CD14-positive monocyte (primary cell): ENCODE measurements at regions of chr5 and their contacts with region 1.

Region 1: GRCh38 chr5:40688127-40688761 is 8.5 kb downstream of the PTGER4 start:
- DNase-seq: peak; percentile 80 to 87 (median 86)
- H3K4me3 ChIP-seq: peak overlapping the region in 1 of 3 experiments; percentile 98
- H3K4me3 Mint-ChIP-seq: peak overlapping the region; percentile 60 to 70
- H3K27ac ChIP-seq: peak overlapping the region in 1 of 2 donors; percentile 71
- H3K27ac Mint-ChIP-seq: peak overlapping the region in 6 of 7 donors; percentile 71 to 92 (median 85)
- H3K4me1 ChIP-seq: peaks cover 42 to 66% of the 10 kb centered on the region in 2 donors
- H3K4me1 Mint-ChIP-seq: peaks cover 67% of the 10 kb centered on the region
- H3K27me3 ChIP-seq: no peaks in the 10 kb centered on the region
- H3K27me3 Mint-ChIP-seq: no peaks in the 10 kb centered on the region
- CTCF ChIP-seq: peak; percentile 90

Region 2: DNA sequence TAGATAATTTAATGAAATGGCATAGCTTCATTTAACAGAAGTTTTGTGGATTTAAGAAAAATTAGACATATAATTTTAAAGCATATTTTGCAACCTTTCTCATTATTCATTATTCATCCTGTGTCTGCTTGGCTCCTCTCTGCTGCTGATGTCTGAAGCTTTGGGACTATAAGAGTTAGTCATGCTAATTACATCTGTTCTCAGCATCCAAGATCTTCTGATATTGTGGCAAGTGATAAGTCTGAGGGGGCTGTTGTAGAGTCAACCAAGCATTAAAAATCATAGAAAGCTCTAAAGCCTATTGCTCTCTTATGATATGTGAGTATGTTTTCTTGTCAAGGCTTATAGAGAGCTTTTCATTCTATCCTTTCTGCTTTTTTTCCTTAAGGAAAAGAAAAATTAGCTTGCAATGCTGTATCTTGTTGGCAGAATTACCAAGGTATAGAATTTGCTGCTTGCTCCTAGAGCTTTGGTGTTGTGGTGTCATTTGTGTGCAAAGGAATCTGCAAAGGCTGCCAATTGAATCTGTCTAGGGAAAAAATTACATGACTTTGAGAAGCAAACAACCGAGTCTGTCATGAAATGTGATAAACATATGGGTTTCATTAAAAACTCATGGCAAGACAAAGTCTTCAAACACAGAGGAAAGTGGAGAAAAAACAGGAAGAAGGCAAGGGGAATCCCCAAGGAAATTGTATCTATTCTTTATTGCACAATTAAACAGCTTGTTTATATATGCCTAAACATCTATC is 1107.4 kb before region 1 on chr5:
- intact Hi-C with region 1: loop called in 1 of 2 experiments (anchors 5 kb)
- DNase-seq: peak; percentile 35 to 70 (median 61)
- H3K4me3 ChIP-seq: peak overlapping the region in 1 of 3 experiments; percentile 9
- H3K4me3 Mint-ChIP-seq: peak overlapping the region in 1 of 2 donors; percentile 42
- H3K27ac ChIP-seq: no peak overlapping the region
- H3K27ac Mint-ChIP-seq: peak overlapping the region in 1 of 7 donors; percentile 61
- H3K4me1 ChIP-seq: peaks cover 10 to 15% of the 10 kb centered on the region in 2 donors
- H3K4me1 Mint-ChIP-seq: peaks cover 17% of the 10 kb centered on the region
- H3K27me3 ChIP-seq: no peaks in the 10 kb centered on the region
- H3K27me3 Mint-ChIP-seq: peaks cover 0 to 4% (median 0%) of the 10 kb centered on the region in 3 donors
- CTCF ChIP-seq: no peak

Region 3: GRCh38 chr5:39948867-39949468 is 739.3 kb before region 1 on chr5:
- intact Hi-C with region 1: loop called in 1 of 2 experiments (anchors 5 kb)
- DNase-seq: peak; percentile 37 to 61 (median 60)
- H3K4me3 ChIP-seq: no peak overlapping the region
- H3K4me3 Mint-ChIP-seq: no peak overlapping the region
- H3K27ac ChIP-seq: no peak overlapping the region
- H3K27ac Mint-ChIP-seq: peak overlapping the region in 3 of 7 donors; percentile 31 to 68 (median 34)
- H3K4me1 ChIP-seq: peaks cover 38 to 40% of the 10 kb centered on the region in 2 donors
- H3K4me1 Mint-ChIP-seq: peaks cover 34% of the 10 kb centered on the region
- H3K27me3 ChIP-seq: no peaks in the 10 kb centered on the region
- H3K27me3 Mint-ChIP-seq: peaks cover 0 to 2% (median 1%) of the 10 kb centered on the region in 3 donors
- CTCF ChIP-seq: peak; percentile 77

Region 4: DNA sequence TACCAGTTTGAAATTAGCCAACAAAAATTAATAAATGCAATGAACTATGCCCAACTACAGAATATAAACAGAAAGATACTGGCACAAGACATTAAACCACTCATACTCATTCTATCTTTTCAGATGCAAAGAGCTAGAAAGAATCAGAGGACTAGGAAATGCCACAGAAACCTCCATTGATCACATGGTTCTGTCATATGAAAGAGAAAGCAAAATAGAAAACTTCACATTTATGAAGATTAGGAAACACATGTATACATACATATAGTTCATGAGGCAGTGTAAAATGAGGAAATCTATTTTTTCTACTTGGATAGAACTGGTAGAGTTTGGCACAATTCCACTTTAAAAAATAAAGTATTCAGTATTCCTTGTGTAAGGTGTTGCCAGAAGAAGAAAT is 283.6 kb before region 1 on chr5:
- intact Hi-C with region 1: loop called in 1 of 2 experiments (anchors 10 kb)
- DNase-seq: peak; percentile 40 to 76 (median 70)
- H3K4me3 ChIP-seq: peak overlapping the region in 1 of 3 experiments; percentile 15
- H3K4me3 Mint-ChIP-seq: peak overlapping the region in 1 of 2 donors; percentile 21
- H3K27ac ChIP-seq: peak overlapping the region in 1 of 2 donors; percentile 91
- H3K27ac Mint-ChIP-seq: peak overlapping the region; percentile 90 to 99 (median 99)
- H3K4me1 ChIP-seq: peaks cover 64 to 66% of the 10 kb centered on the region in 2 donors
- H3K4me1 Mint-ChIP-seq: peaks cover 67% of the 10 kb centered on the region
- H3K27me3 ChIP-seq: no peaks in the 10 kb centered on the region
- H3K27me3 Mint-ChIP-seq: peaks cover 0 to 2% (median 0%) of the 10 kb centered on the region in 3 donors
- CTCF ChIP-seq: no peak

Region 5: GRCh38 chr5:40437452-40437861 is 250.8 kb before region 1 on chr5:
- intact Hi-C with region 1: loop called in 1 of 2 experiments (anchors 10 kb)
- DNase-seq: peak; percentile 87 to 98 (median 96)
- H3K4me3 ChIP-seq: peak overlapping the region in 2 of 3 experiments; percentile 19 to 48
- H3K4me3 Mint-ChIP-seq: peak overlapping the region in 1 of 2 donors; percentile 48
- H3K27ac ChIP-seq: peak overlapping the region; percentile 33 to 90
- H3K27ac Mint-ChIP-seq: peak overlapping the region; percentile 86 to 95 (median 93)
- H3K4me1 ChIP-seq: peaks cover 26% of the 10 kb centered on the region in 2 donors
- H3K4me1 Mint-ChIP-seq: peaks cover 31% of the 10 kb centered on the region
- H3K27me3 ChIP-seq: no peaks in the 10 kb centered on the region
- H3K27me3 Mint-ChIP-seq: peaks cover 0 to 2% (median 0%) of the 10 kb centered on the region in 3 donors
- CTCF ChIP-seq: no peak

Region 6: GRCh38 chr5:40486437-40487275 is 201.6 kb before region 1 on chr5:
- intact Hi-C with region 1: loop called (anchors 5 to 10 kb)
- DNase-seq: peak; percentile 92 to 98 (median 97)
- H3K4me3 ChIP-seq: peak overlapping the region in 1 of 3 experiments; percentile 59
- H3K4me3 Mint-ChIP-seq: peak overlapping the region in 1 of 2 donors; percentile 67
- H3K27ac ChIP-seq: peak overlapping the region; percentile 78 to 92
- H3K27ac Mint-ChIP-seq: peak overlapping the region; percentile 92 to 98 (median 96)
- H3K4me1 ChIP-seq: peaks cover 58 to 78% of the 10 kb centered on the region in 2 donors
- H3K4me1 Mint-ChIP-seq: peaks cover 69% of the 10 kb centered on the region
- H3K27me3 ChIP-seq: no peaks in the 10 kb centered on the region
- H3K27me3 Mint-ChIP-seq: no peaks in the 10 kb centered on the region
- CTCF ChIP-seq: no peak

Region 7: DNA sequence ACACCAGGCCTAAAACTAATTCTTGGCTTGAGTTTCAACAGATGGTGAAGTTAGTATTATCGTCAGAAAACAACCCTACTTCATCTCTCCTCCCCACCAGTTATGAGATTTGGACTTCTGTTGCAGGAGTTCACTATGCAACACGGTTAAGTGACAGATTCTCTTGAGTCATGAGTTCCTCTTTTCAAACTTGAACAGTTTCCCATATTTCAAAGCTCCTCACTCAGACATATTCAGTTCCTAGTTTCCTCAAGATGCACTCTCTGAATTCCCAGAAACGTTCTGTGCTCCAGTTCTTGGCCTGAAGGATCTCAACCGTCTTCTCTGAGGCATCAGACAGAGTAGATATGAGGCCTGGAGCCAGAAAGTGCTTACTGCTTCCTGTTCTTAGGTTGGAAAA is 15.8 kb before region 1 on chr5:
- intact Hi-C with region 1: no loop called
- DNase-seq: peak; percentile 66 to 90 (median 84)
- H3K4me3 ChIP-seq: peak overlapping the region in 2 of 3 experiments; percentile 10 to 60
- H3K4me3 Mint-ChIP-seq: peak overlapping the region; percentile 28 to 69
- H3K27ac ChIP-seq: peak overlapping the region in 1 of 2 donors; percentile 79
- H3K27ac Mint-ChIP-seq: peak overlapping the region; percentile 86 to 95 (median 90)
- H3K4me1 ChIP-seq: peaks cover 66 to 70% of the 10 kb centered on the region in 2 donors
- H3K4me1 Mint-ChIP-seq: peaks cover 67% of the 10 kb centered on the region
- H3K27me3 ChIP-seq: no peaks in the 10 kb centered on the region
- H3K27me3 Mint-ChIP-seq: peaks cover 0 to 7% (median 0%) of the 10 kb centered on the region in 3 donors
- CTCF ChIP-seq: no peak

Region 8: GRCh38 chr5:40755407-40756365 is 67.4 kb after region 1 on chr5 and contains the start of gene TTC33:
- intact Hi-C with region 1: loop called in 1 of 2 experiments (anchors 10 kb)
- DNase-seq: peak; percentile 83 to 89 (median 88)
- H3K4me3 ChIP-seq: peak within 1 kb of the TSS; percentile 82 to 94 (median 92)
- H3K4me3 Mint-ChIP-seq: no peak within 1 kb of the TSS
- H3K27ac ChIP-seq: peak within 1 kb of the TSS; percentile 26 to 75
- H3K27ac Mint-ChIP-seq: no peak within 1 kb of the TSS
- H3K4me1 ChIP-seq: peaks cover 12 to 16% of the 10 kb centered on the region in 2 donors
- H3K4me1 Mint-ChIP-seq: no peaks in the 10 kb centered on the region
- H3K27me3 ChIP-seq: no peaks in the 10 kb centered on the region
- H3K27me3 Mint-ChIP-seq: peaks cover 0 to 2% (median 0%) of the 10 kb centered on the region in 3 donors
- CTCF ChIP-seq: peak; percentile 68
- polyA plus RNA-seq, gene TTC33: 1.5 to 11.7 (median 9.4) TPM